CD4-positive, alpha-beta T cell (primary cell): ENCODE measurements at regions of chr10 and their contacts with region 1.

Region 1: GRCh38 chr10:127243490-127244272 is 47.3 kb upstream of the INSYN2A start:
- DNase-seq: peak in 11 of 14 experiments; percentile 8 to 51 (median 13)
- ATAC-seq: no peak
- H3K4me3 ChIP-seq: no peak overlapping the region
- H3K4me3 Mint-ChIP-seq: no peak overlapping the region
- H3K27ac ChIP-seq: no peak overlapping the region
- H3K27ac Mint-ChIP-seq: no peak overlapping the region
- H3K4me1 ChIP-seq: no peaks in the 10 kb centered on the region
- H3K4me1 Mint-ChIP-seq: no peaks in the 10 kb centered on the region
- H3K27me3 ChIP-seq: no peaks in the 10 kb centered on the region
- H3K27me3 Mint-ChIP-seq: peaks cover 22% of the 10 kb centered on the region
- CTCF ChIP-seq: peak; percentile 48

Region 2: GRCh38 chr10:127338399-127339110 is 94.9 kb after region 1 on chr10:
- CTCF ChIA-PET with region 1: no interaction called
- POLR2A ChIA-PET with region 1: no interaction called
- intact Hi-C with region 1: no loop called
- DNase-seq: no peak
- ATAC-seq: no peak
- H3K4me3 ChIP-seq: no peak overlapping the region
- H3K4me3 Mint-ChIP-seq: no peak overlapping the region
- H3K27ac ChIP-seq: no peak overlapping the region
- H3K27ac Mint-ChIP-seq: no peak overlapping the region
- H3K4me1 ChIP-seq: peaks cover under 1% of the 10 kb centered on the region
- H3K4me1 Mint-ChIP-seq: peaks cover 9% of the 10 kb centered on the region
- H3K27me3 ChIP-seq: no peaks in the 10 kb centered on the region
- H3K27me3 Mint-ChIP-seq: peaks cover 8% of the 10 kb centered on the region
- CTCF ChIP-seq: no peak

Region 3: DNA sequence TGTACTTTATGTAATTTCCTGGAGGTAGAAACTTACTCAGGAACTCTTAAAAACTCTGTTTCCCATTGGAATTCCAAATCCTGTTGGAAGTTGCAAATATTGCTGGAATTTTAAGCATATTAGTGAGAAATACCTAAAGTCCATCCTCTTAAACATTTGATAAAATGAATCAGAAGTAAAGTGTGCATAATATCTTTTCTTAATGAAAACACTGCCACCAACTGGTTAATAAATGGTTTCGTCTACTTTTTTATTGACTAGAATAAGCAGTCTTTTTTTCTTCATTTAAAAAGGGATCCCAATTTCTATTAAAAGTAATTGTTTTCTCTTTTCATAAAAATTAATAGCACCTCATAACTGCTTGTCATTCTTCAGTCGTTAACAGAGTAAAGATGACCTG is 333.7 kb after region 1 on chr10:
- CTCF ChIA-PET with region 1: no interaction called
- POLR2A ChIA-PET with region 1: no interaction called
- intact Hi-C with region 1: loop called in 1 of 2 experiments (anchors 5 kb)
- DNase-seq: no peak
- ATAC-seq: no peak
- H3K4me3 ChIP-seq: no peak overlapping the region
- H3K4me3 Mint-ChIP-seq: no peak overlapping the region
- H3K27ac ChIP-seq: no peak overlapping the region
- H3K27ac Mint-ChIP-seq: no peak overlapping the region
- H3K4me1 ChIP-seq: no peaks in the 10 kb centered on the region
- H3K4me1 Mint-ChIP-seq: no peaks in the 10 kb centered on the region
- H3K27me3 ChIP-seq: no peaks in the 10 kb centered on the region
- H3K27me3 Mint-ChIP-seq: peaks cover 11% of the 10 kb centered on the region
- CTCF ChIP-seq: no peak